GM10248 (cell line): ENCODE measurements at regions of chr11 and their contacts with region 1.

Region 1: GRCh38 chr11:33808228-33808828 is 34.0 kb upstream of the FBXO3 start:
- DNase-seq: peak; percentile 76
- CTCF ChIP-seq: peak; percentile 96

Region 2: GRCh38 chr11:33790040-33790439 is 18.3 kb before region 1 on chr11:
- CTCF ChIA-PET with region 1: interaction called, 15 read pairs
- POLR2A ChIA-PET with region 1: no interaction called
- DNase-seq: no peak
- CTCF ChIP-seq: no peak

Region 3: DNA sequence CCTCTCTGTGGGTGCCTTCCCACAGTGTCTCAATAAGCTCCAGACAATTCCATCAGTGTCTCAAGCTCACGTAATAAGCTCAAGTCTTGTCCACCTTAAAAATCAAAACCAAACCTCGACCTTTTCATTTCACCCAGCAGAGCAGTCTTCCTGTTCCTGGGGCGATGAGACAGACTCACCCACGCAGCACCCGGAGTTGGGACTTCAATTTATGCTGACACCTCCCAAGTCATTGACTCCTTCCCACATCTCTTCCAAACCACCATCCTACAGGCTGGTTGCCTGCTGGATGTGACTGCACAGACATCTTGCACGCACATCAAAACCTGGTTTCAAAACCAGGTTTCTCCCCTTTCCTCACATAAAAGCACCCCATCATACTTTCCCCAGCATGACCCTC is 10.9 kb after region 1 on chr11:
- CTCF ChIA-PET with region 1: interaction called, 190 read pairs
- POLR2A ChIA-PET with region 1: no interaction called
- DNase-seq: no peak
- CTCF ChIP-seq: no peak

Region 4: GRCh38 chr11:33829433-33830141 is 21.3 kb after region 1 on chr11:
- CTCF ChIA-PET with region 1: interaction called, 190 read pairs
- POLR2A ChIA-PET with region 1: no interaction called
- DNase-seq: peak; percentile 81
- CTCF ChIP-seq: peak; percentile 80

Region 5: DNA sequence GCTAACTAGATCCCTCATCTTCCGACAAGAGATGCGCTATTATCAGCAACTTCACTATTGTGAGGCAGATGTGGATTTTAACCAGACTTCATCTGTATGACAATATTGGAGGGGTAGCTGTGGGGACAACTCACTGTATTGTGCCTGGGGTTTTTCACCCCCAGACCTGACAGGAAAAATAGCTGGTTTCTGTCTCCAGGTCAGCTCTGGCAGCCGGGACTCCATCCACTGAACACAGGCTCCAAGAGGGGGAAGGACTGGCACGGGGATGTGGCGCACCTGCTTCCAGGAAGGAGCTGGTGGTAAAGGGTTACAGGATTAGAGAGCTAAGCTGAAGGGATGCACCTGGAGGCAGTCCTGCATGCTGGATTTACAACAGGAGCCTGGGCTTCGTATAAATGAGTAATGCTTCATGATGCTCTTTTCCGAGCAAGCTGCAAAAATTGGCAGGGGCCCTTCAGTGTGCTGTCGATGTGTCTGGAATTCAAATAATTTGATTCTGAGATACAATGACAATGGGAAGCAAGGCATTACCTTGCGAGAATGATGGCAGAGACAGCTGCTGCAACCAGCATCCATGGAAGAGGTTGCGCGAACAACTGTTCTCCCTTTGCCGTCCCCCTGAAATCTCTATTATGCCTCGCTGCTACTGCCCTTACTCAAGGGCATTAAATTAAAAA is 34.0 kb after region 1 on chr11:
- CTCF ChIA-PET with region 1: interaction called, 12 read pairs
- POLR2A ChIA-PET with region 1: no interaction called
- DNase-seq: no peak
- CTCF ChIP-seq: no peak

Region 6: GRCh38 chr11:33848717-33849390 is 40.5 kb after region 1 on chr11:
- CTCF ChIA-PET with region 1: interaction called, 12 read pairs
- POLR2A ChIA-PET with region 1: no interaction called
- DNase-seq: no peak
- CTCF ChIP-seq: no peak

Region 7: GRCh38 chr11:33987975-33988580 is 179.8 kb after region 1 on chr11:
- CTCF ChIA-PET with region 1: interaction called, 47 read pairs
- POLR2A ChIA-PET with region 1: no interaction called
- DNase-seq: peak; percentile 73
- CTCF ChIP-seq: peak; percentile 83

Region 8: DNA sequence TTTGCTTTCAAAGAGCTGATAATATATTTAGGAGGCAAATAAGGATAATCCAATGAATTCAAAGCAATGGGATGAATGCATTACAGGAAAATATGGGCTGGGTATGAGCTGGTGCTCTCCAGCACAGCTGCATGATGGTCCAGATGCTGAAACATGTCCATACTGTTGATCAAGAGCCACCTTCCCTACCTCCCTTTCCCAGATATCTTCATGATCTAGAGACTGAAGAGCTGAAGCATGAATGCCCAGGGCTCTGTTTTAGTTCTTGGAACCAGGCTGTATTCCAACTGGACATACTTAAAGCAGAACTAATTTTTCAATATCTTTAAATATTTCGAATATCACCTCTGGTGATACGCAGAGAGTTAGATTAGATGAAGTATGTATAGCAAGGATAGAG is 211.3 kb after region 1 on chr11:
- CTCF ChIA-PET with region 1: no interaction called
- POLR2A ChIA-PET with region 1: no interaction called
- DNase-seq: no peak
- CTCF ChIP-seq: no peak